ENCODE measurements at regions of chr4 and their contacts with region 1.

Region 1: GRCh38 chr4:6134612-6135220 is 65.6 kb downstream of the JAKMIP1 start:
- DNase-seq: peak; percentile 87
- ATAC-seq: peak; percentile 100
- H3K4me3 Mint-ChIP-seq: no peak overlapping the region
- H3K27ac Mint-ChIP-seq: peak overlapping the region; percentile 74
- H3K4me1 Mint-ChIP-seq: peaks cover 36% of the 10 kb centered on the region
- H3K27me3 Mint-ChIP-seq: no peaks in the 10 kb centered on the region

Region 2: DNA sequence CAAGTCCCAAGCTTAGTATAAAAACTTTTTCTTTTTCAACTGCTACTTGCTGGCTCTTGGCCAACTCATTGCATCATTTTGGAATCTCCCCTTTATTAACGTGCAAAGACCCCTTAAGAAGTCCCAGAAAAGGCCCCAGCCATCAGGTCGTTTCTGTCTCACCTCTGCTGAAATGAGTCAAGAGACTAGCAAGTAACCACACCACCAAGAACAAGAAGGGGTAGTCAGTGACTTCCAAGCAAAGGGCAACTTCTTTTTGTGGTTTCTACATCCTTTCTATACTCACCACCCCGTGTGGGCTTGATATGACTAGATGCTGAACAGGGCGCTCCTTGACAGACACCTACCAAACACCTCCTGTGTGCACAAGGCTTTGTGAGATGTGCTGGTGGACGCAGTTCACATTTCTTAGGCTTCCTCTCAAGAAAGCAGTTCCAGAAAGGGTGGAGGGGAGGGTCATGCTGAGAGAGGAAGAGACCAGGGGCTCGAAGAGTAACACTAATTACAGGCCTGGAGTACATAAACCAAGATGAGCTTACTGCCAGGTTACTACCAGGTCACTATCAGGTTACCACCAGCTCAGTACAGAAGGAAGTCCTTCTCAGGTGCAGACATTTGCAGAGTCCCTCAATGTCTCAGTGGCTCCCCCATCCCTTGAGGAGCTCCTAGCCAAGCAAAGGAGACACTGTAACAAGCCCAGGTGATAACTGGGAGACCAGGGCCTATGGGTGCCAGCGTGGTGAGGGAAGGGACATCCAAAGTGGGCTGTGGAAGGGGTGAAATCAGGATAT is 46.3 kb after region 1 on chr4:
- CTCF ChIA-PET with region 1: interaction called, 25 read pairs
- DNase-seq: peak; percentile 91
- ATAC-seq: peak; percentile 84
- H3K4me3 Mint-ChIP-seq: peak overlapping the region; percentile 60
- H3K27ac Mint-ChIP-seq: peak overlapping the region; percentile 98
- H3K4me1 Mint-ChIP-seq: peaks cover 92% of the 10 kb centered on the region
- H3K27me3 Mint-ChIP-seq: no peaks in the 10 kb centered on the region

Region 3: DNA sequence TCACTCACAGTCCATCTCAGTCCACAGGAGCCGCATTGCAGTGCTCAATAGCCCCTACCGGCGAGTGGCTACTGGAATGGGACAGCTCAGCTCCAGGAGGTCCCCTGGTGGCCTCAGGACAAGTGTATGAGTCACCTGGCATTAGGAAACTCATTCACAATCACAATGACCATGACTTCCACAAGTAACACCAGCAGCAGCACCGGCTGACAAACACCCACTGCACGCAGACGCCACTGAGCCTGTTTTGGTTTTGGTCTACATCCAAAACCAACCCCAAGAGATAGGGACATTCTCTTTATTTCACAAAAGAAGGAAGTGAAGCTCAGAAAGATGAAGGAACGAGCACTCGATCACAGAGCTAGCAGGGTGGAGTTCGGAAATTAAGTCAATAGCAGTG is 57.5 kb after region 1 on chr4:
- CTCF ChIA-PET with region 1: interaction called, 28 read pairs
- DNase-seq: no peak
- ATAC-seq: no peak
- H3K4me3 Mint-ChIP-seq: no peak overlapping the region
- H3K27ac Mint-ChIP-seq: no peak overlapping the region
- H3K4me1 Mint-ChIP-seq: peaks cover 74% of the 10 kb centered on the region
- H3K27me3 Mint-ChIP-seq: no peaks in the 10 kb centered on the region

Region 4: DNA sequence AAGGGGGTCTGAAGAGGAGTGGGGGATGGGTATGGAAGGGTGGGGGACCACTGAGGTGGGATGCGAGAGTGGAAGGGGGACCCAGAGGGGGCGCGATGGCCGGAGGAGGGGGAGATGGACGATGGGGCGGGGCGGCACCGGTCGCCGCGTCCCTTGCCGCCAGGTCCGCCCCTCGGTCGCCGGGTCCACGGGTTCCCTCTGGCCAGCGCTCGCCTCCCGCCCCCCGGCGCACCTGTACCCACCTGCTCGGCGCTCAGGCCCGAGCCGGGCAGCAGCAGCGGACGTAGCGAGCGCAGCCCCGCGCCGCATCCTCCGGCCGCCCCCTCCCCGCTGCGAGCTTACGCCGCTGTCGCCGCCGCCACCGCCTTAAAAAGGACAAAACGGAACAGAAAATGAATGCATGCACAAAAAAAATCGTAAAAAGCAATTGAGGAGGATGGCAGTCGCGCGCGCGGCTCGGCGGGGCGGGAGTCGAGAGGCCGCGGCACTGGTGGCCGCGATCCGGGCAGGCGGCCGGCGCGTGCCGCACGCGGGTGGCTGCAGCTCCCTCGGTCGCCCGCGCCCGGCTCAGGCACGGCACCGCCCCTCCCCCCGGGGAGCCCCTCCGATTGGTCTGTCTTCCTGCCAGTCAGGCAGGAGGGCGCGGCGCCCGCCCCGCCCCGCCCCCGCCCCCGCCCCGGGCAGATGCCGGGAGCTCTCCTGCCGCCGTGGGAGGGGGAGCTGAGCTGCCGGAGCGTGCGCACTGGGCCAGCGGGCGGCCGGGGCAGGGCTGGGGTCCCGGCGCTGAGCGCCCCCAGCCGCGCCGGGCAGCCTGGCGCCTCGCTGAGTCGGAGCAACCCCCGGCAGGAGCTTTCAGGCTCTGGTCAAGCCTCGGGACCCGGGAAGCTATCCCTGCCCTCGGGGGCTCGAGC is 65.5 kb after region 1 on chr4 and contains the start of gene JAKMIP1:
- CTCF ChIA-PET with region 1: interaction called, 23 read pairs
- DNase-seq: peak; percentile 93
- ATAC-seq: peak; percentile 70
- H3K4me3 Mint-ChIP-seq: peak within 1 kb of the TSS; percentile 94
- H3K27ac Mint-ChIP-seq: peak within 1 kb of the TSS; percentile 80
- H3K4me1 Mint-ChIP-seq: peaks cover 48% of the 10 kb centered on the region
- H3K27me3 Mint-ChIP-seq: peaks cover 11% of the 10 kb centered on the region
- total RNA-seq, gene JAKMIP1: 41.7 to 57.8 TPM